ENCODE measurements at regions of chr6 and their contacts with region 1.

Region 1: DNA sequence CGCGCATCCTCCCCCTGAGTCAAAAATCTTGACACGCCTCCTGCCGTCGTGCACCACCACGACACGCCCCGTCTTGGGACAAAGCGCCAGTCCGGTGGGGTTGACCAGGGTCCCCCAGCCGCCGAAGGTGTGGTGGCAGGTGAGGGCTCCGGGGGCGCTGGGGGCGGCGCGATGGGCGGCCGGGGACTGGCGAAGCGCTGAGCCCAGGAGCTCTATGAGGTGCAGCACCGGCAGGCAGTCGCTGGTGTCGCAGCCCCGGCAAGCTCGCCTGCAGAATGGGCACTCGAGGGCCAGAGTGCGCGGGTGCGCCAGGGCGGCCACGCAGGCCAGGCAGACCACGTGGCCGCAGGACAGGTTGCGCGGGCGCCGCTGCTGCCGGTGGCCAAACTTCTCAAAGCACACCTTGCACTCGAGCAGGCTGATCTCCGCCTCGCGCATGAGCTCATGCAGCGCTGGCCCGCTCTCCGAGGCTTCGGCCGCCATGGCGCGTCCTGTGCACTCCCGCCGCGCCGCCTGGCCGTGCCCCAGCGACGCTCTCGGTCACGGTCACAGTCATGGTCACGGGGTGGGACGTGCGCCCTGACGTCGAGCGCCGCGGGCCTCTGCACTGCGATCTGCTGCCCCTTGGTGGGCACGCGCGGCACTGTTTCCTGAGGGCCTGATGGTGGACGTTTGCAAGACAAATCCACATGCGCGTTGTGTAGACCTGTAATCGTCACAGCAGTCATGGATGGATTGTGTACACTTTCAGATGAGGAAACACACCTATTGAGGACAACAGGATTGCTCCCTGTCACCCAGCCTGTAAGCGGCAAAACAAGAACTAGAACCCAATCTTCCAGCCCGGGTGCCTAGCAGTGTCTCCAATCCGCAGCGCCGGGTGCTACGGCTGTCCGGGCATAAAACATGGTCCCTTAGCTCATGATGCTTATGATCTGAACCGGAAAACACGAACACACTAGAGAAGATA is at the start of gene NHLRC1:
- DNase-seq: peak; percentile 86 to 93 (median 89)
- H3K4me3 ChIP-seq: peak within 1 kb of the TSS; percentile 38 to 90 (median 70)
- H3K27ac ChIP-seq: peak within 1 kb of the TSS in 56 of 59 donors; percentile 16 to 93 (median 76)
- H3K27me3 ChIP-seq: no peaks in the 10 kb centered on the region
- CTCF ChIP-seq: peak; percentile 83 to 99 (median 97)
- total RNA-seq, gene NHLRC1: 2.5 to 7.7 (median 4.4) TPM

Region 2: DNA sequence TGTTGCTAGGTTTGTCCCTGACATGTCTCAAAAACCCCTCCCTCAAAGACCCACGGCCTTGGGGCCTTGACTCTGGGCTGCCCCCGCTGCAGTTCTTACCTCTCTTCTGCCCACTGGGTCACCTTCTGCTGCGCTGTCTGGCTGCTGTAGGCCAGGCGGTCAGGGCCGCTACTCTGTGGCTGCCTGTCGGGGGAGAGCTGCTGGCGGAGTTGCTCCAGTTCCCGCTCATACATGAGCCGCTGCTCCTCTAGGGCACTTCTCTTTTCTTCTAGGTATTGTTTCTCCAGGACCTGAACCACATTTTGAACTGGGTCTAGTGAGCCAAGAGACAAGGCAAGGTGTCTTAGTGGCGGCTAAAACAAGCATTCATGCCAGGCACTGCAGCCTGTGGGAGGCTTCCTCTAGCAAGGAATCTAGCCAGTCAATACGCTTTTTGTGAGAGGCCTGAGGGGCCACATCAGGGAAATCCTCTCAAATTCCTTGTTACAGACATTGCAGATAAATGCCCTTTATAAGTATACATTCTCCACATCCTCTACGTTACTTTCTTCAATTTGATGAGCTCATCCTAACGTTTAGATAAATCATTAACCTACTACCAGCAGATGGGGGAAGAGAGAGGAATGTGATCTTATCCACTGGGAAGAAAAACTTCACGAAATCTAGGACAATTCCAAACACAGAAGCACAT is 305.3 kb before region 1 on chr6:
- intact Hi-C with region 1: loop called in 1 of 2 experiments (anchors 2 kb)
- DNase-seq: no peak
- H3K4me3 ChIP-seq: no peak overlapping the region
- H3K27ac ChIP-seq: peak overlapping the region in 4 of 59 donors; percentile 1 to 20 (median 16)
- H3K27me3 ChIP-seq: no peaks in the 10 kb centered on the region
- CTCF ChIP-seq: peak in 9 of 56 donors; percentile 5 to 21 (median 10)

Region 3: GRCh38 chr6:17831135-17831534 is 291.3 kb before region 1 on chr6:
- intact Hi-C with region 1: loop called in 1 of 2 experiments (anchors 10 kb)
- DNase-seq: peak in 1 of 10 donors; percentile 14
- H3K4me3 ChIP-seq: peak overlapping the region in 1 of 59 donors; percentile 3
- H3K27ac ChIP-seq: peak overlapping the region in 57 of 59 donors; percentile 13 to 88 (median 75)
- H3K27me3 ChIP-seq: no peaks in the 10 kb centered on the region
- CTCF ChIP-seq: peak in 3 of 56 donors; percentile 5 to 23 (median 15)

Region 4: GRCh38 chr6:17865798-17866725 is 256.3 kb before region 1 on chr6:
- intact Hi-C with region 1: loop called in 1 of 2 experiments (anchors 2 kb)
- DNase-seq: peak in 9 of 10 donors; percentile 47 to 88 (median 74)
- H3K4me3 ChIP-seq: peak overlapping the region in 1 of 59 donors; percentile 17
- H3K27ac ChIP-seq: peak overlapping the region; percentile 74 to 98 (median 93)
- H3K27me3 ChIP-seq: no peaks in the 10 kb centered on the region
- CTCF ChIP-seq: peak in 2 of 56 donors; percentile 12 to 22

Region 5: DNA sequence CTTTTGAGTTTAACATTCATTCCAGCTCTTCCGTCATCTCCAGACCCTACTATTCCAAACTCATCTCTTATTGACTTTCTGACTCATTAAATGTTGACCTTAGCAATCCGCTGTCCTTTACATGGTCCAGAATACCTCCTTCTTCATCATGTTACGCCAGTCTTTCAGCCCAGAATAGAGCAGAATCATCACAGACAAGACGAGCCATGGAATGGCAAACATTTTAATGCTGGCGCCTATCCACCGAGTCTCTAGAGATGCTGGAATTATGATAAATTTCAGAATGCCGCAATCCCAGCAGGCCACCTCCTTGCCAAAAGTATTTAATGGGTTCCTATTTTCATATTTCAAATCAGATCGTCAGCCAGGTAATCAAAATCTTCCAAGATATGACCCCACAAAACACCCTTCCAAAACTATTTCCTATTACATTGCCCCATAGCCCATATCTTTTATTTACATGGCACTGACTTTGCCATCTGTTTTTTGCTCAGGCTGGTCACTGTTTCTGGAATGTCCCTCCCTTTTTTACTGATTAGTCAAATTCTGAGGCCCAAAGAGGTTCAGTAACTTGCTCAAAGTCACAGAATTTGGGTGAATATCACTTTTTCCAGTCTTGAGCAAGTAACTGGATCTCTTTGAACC is 40.9 kb before region 1 on chr6:
- intact Hi-C with region 1: no loop called
- DNase-seq: no peak
- H3K4me3 ChIP-seq: no peak overlapping the region
- H3K27ac ChIP-seq: no peak overlapping the region
- H3K27me3 ChIP-seq: no peaks in the 10 kb centered on the region
- CTCF ChIP-seq: no peak

Measured in dorsolateral prefrontal cortex (tissue), 120 donors.